Caco-2 (cell line): ENCODE measurements at regions of chr9 and their contacts with region 1.

Region 1: GRCh38 chr9:128067876-128068613 is at the start of gene SLC25A25:
- DNase-seq: peak; percentile 100
- H3K4me3 ChIP-seq: peak within 1 kb of the TSS; percentile 77
- H3K4me3 Mint-ChIP-seq: no peak within 1 kb of the TSS
- H3K27ac Mint-ChIP-seq: peak within 1 kb of the TSS; percentile 63
- H3K4me1 ChIP-seq: peaks cover 24% of the 10 kb centered on the region
- H3K4me1 Mint-ChIP-seq: peaks cover 19% of the 10 kb centered on the region
- H3K27me3 ChIP-seq: no peaks in the 10 kb centered on the region
- H3K27me3 Mint-ChIP-seq: no peaks in the 10 kb centered on the region
- CTCF ChIP-seq: no peak
- total RNA-seq, gene SLC25A25: 16.5 and 18.5 TPM in 2 replicates

Region 2: GRCh38 chr9:128078504-128079434 is 10.7 kb after region 1 on chr9:
- CTCF ChIA-PET with region 1: interaction called, 15 read pairs
- POLR2A ChIA-PET with region 1: interaction called, 5 read pairs
- intact Hi-C with region 1: loop called (anchors 1 kb)
- DNase-seq: peak; percentile 66 to 78
- H3K4me3 ChIP-seq: no peak overlapping the region
- H3K4me3 Mint-ChIP-seq: peak overlapping the region; percentile 56
- H3K27ac Mint-ChIP-seq: peak overlapping the region; percentile 86
- H3K4me1 ChIP-seq: peaks cover 35% of the 10 kb centered on the region
- H3K4me1 Mint-ChIP-seq: peaks cover 34% of the 10 kb centered on the region
- H3K27me3 ChIP-seq: no peaks in the 10 kb centered on the region
- H3K27me3 Mint-ChIP-seq: no peaks in the 10 kb centered on the region
- CTCF ChIP-seq: no peak